Posterior cingulate gyrus (tissue), 11 donors: ENCODE measurements at regions of chr10 and their contacts with region 1.

Region 1: DNA sequence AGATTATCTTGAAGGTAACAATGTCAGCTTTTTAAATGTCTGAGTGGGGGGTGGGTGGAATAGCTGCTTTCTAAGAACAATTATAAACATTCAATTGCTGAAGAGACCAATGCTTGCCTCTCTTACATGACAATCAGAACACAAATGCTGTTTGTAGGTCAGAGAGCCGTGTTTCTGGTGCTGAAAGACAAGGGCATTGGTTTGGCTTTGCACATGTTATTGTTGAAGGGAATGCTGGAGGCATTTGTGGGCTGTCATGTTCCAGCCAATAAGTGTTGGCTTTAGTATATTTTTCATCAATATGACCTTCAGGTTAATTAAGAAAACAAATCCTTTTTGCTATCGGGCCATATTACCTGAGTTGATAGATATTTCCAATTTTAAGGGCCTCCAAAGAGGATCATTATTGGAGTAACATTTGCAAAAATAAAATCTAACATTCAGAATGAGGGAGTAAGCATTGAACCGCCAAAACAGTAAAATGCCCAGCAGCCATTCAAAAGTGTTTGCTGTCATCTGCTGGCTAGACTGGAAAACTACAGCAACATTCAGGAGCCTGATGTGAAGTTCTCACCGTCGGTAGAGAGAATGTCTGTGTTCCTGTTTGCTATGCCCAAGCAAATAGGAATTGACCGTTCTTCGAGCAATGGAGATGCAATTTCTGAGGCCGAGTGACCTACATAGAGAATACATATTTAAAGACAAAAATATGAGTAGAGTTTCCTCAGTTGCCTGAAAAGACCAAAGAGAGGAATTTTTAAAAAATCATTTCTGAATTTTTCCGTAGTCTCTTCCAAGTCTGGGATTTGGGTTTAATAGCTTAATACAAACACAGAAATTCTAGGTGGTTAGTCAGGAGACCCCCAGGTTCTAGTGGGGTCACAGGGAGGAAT is 118.9 kb downstream of the APBB1IP start:
- DNase-seq: peak in 2 of 10 donors; percentile 23 to 29

Region 2: GRCh38 chr10:25725918-25726716 is 830.9 kb before region 1 on chr10:
- intact Hi-C with region 1: loop called (anchors 2 kb)
- DNase-seq: peak in 3 of 10 donors; percentile 16 to 33 (median 28)

Region 3: GRCh38 chr10:25758041-25758457 is 798.9 kb before region 1 on chr10:
- intact Hi-C with region 1: loop called (anchors 2 kb)
- DNase-seq: peak in 3 of 10 donors; percentile 19 to 29 (median 22)

Region 4: GRCh38 chr10:25875556-25876165 is 681.3 kb before region 1 on chr10:
- intact Hi-C with region 1: loop called (anchors 5 kb)
- DNase-seq: peak; percentile 36 to 92 (median 76)

Region 5: DNA sequence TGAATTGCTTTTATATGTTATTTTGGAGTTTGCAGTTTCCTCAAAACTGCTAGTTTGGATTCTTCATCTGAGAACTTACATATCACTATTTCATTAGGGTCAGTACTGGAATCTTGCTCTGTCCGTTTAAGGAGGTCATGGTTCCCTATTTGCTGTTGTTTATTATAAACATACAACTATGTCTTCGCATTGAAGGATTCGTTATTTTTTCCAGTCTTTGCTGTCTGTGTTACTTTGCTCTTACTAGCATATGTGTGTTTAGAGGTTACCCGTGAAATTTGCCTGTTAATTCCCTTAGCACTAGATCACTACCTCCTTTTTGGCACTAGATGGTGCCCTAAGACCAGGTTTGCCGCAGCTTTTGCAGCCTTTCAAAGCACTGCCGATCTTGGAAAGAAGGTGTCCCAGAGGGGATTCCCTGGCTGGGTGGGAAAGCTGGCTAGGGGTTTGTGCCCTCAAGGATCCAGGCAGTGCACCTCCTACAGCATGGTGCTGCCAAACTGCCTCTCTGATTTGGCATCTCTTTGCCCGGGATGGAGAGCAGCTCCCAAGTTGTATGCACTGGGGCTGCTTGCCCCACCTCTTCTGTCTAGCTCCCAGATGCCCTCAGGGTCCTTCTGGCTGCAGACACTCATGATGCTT is 221.9 kb before region 1 on chr10:
- intact Hi-C with region 1: loop called (anchors 1 kb)
- DNase-seq: peak in 6 of 10 donors; percentile 8 to 70 (median 15)